ENCODE measurements at regions of chr2 and their contacts with region 1.

Region 1: DNA sequence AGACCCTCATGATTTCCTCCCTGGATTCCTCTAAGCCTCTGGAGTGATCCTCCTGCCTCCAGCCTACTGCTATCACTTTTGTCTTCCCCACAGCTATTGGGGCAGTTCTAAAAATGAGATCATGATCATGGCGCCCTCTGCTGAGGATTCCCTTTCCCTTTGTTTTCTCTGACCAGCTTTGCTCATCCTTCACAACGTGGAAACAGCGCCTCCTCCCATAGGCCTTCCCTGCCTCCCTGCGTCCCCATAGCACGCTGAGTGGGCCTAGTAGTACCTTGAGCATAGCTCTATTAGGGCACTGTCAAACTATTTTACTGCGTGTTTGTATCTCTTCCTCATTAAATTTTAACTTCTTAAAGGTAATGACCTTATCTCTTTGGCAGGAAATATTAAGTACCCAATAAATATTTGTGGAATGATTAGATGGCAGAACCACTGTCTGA is 207.0 kb upstream of the FANCL start:
- DNase-seq: peak; percentile 45
- H3K4me3 Mint-ChIP-seq: no peak overlapping the region
- H3K27ac Mint-ChIP-seq: no peak overlapping the region
- H3K4me1 Mint-ChIP-seq: no peaks in the 10 kb centered on the region
- H3K27me3 Mint-ChIP-seq: peaks cover 6% of the 10 kb centered on the region

Region 2: DNA sequence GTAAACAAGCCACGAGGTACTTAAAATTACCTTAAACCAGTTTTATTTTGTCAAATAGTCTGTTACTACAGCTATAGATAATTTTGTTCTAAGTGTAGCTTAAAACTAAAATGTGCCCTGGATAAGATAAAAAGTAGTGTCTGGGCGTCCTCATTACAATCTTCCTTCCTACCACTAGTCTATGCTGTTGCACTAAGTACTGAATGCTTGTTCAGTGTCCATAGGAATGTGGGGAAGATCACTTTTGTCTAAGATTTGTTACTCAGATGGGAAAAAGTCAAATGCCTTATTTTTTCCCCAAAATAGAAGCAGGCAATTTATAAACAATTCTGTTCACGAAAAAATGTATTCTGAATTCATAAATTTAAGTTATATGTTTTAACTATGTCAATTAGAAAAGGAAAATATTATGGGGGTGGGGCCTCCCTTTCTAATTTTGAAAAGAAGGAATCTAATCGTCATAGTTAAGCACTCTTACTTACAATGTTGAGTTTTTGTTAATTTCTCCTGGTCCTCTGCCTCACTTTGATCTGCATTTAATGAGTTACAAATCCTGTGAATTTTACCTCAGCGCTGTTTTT is 541.8 kb before region 1 on chr2:
- CTCF ChIA-PET with region 1: interaction called, 16 read pairs
- DNase-seq: no peak
- H3K4me3 Mint-ChIP-seq: no peak overlapping the region
- H3K27ac Mint-ChIP-seq: no peak overlapping the region
- H3K4me1 Mint-ChIP-seq: peaks cover 22% of the 10 kb centered on the region
- H3K27me3 Mint-ChIP-seq: peaks cover 3% of the 10 kb centered on the region

Measured in activated naive CD4-positive, alpha-beta T cell treated with anti-CD3 and anti-CD28 coated beads, Interleukin-2, amount 10 ng/mL, durations not matched to agents 7 days and 5 days (primary cell).